ENCODE measurements at regions of chr10 and their contacts with region 1.

Region 1: DNA sequence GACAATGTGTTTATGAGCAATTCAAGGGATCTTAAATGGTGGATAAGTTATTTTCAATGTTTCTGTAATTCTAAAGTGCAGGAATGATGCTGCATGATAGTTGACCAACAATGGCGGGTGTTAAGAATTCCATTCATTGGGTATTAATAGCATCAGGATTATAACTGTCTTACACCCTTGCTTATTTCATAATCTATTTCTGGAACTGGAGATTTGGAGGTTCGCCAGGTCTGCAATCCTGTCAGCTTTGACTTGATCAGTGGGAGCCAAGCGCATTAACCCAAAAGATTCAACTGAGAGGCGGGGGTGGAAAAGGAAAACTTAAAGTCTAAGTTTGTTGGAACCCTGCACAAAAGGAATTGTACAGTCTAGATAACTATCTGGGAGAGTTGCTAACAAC is 114.9 kb upstream of the ZEB1 start:
- DNase-seq: no peak
- ATAC-seq: peak; percentile 34

Region 2: DNA sequence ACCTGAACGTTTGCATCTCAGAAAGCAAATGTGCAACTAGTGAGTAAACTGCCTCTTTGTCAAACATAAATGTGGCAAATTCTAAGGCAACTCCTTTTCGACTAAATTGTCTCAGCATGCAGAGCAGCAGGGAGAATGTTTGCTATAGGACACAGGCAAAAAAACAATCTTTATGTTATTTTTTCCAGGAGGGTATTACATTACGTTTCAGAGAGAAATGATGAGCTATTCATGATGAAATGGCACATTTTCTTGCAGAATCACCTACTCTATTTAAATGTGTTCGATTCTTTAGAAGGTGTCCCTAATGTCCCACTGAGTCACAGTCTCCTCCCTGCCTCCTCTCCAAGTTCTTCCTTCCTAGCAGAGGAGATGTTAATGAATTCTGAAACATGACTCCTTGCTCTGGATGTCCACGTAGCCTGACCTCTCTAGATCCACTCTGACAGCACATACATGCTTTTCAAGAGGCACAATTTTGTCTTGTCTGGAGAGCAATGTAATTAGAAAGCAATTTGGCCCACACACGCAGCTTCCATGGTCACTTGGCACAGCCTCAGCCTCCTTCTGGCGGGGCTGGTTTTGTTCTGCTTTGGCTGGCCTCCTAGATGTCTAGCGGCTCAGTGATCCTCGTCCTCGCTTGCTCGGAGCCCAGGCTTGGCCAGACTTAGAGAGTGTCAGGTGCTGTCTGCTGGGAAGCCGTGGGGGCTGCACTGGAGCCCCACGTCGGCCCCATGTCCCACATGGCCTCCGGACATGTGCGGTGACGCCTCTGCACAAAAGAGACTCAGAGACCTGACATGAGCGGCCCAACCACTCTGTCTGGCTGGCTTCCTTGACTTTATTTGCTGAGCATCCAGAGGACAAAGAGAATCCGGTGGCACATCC is 46.7 kb before region 1 on chr10:
- intact Hi-C with region 1: loop called (anchors 1 kb)
- DNase-seq: peak; percentile 81
- ATAC-seq: peak; percentile 93

Region 3: GRCh38 chr10:32437334-32437733 is 1233.2 kb after region 1 on chr10:
- intact Hi-C with region 1: no loop called
- DNase-seq: no peak
- ATAC-seq: no peak